ENCODE measurements at regions of chr1 and their contacts with region 1.

Region 1: GRCh38 chr1:247078261-247079140 is at the start of gene ZNF670:
- DNase-seq: peak; percentile 98
- H3K4me3 ChIP-seq: peak within 1 kb of the TSS; percentile 54 to 90 (median 84)
- H3K27ac ChIP-seq: peak within 1 kb of the TSS; percentile 78 to 85 (median 82)
- H3K4me1 ChIP-seq: peaks cover 0 to 15% (median 10%) of the 10 kb centered on the region in 4 donors
- H3K27me3 ChIP-seq: no peaks in the 10 kb centered on the region
- CTCF ChIP-seq: no peak
- EP300 ChIP-seq: no peak
- POLR2A ChIP-seq: peak; percentile 16 to 34
- total RNA-seq, gene ZNF670: 3.0 to 6.7 (median 3.9) TPM

Region 2: DNA sequence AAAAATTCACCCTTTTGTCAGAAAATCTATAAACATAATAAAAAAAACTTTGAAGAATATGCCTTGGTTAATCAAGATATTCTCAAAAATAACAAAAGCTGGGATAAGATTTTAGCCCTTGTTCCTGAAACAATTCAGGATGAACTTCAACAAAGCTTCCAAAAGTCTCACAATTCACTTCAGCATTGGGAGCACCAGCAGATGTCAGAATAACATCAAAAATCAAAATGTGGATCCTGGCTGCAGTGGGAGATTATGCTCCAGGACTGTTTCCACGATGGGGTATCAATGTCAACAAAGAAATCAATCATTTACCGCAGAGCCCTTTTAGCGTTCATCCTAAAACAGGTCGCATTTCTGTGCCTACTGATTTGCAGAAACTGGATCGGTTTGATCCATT is 35.1 kb before region 1 on chr1:
- intact Hi-C with region 1: no loop called
- DNase-seq: no peak
- H3K4me3 ChIP-seq: no peak overlapping the region
- H3K27ac ChIP-seq: no peak overlapping the region
- H3K4me1 ChIP-seq: peaks cover 0 to 8% (median 0%) of the 10 kb centered on the region in 4 donors
- H3K27me3 ChIP-seq: no peaks in the 10 kb centered on the region
- CTCF ChIP-seq: peak in 1 of 4 experiments; percentile 10
- EP300 ChIP-seq: no peak
- POLR2A ChIP-seq: no peak

Region 3: DNA sequence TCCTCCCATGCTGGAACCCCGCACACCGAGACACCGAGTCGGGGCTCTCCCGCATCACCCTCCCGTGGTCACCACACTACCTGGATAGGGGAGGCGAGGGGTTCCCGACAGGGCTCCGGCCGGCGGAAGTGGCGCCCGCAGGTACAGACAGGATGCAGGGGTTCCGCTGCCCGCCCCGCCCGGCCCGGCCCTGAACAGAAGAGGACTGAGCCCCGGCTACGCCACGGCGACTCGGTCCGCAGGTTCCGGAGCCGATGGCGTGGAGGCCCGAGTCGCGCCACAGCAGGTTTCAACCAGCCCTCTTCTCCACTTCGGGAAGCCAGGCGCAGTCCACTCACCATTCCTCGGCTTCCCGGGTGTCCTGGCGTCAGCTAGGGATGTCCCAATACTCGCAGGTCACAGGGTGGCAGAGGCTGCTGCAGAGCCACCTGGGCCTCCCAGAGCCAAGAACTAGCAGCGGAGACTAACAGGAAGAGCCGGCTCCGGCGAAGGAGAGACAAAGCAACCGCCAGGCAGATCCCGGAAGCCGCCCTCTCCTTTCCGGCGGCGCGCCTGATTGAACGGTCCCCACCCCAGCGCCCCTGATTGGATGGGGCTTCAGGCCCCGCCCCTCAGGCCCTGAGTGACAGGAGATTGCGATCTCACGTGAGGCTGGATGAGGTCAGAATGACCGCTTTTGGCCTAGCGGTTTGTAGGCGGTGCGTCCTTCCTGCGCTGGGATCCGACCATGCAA is 25.5 kb after region 1 on chr1 and contains the start of gene ZNF669:
- intact Hi-C with region 1: loop called (anchors 1 kb)
- DNase-seq: peak; percentile 99
- H3K4me3 ChIP-seq: peak within 1 kb of the TSS; percentile 76 to 91 (median 84)
- H3K27ac ChIP-seq: peak within 1 kb of the TSS; percentile 87 to 93 (median 88)
- H3K4me1 ChIP-seq: peaks cover 0 to 22% (median 18%) of the 10 kb centered on the region in 4 donors
- H3K27me3 ChIP-seq: no peaks in the 10 kb centered on the region
- CTCF ChIP-seq: no peak
- EP300 ChIP-seq: no peak
- POLR2A ChIP-seq: peak; percentile 75 to 78
- total RNA-seq, gene ZNF669: 4.2 to 5.8 (median 5.2) TPM

Measured in sigmoid colon (tissue), 7 donors.